ENCODE measurements at regions of chr17 and their contacts with region 1.

Region 1: GRCh38 chr17:39754161-39754951 is 16.6 kb downstream of the GRB7 start:
- DNase-seq: peak; percentile 80
- H3K4me3 Mint-ChIP-seq: peak overlapping the region; percentile 70
- H3K27ac Mint-ChIP-seq: no peak overlapping the region
- H3K4me1 Mint-ChIP-seq: no peaks in the 10 kb centered on the region
- H3K27me3 Mint-ChIP-seq: peaks cover 45% of the 10 kb centered on the region
- CTCF ChIP-seq: peak; percentile 99

Region 2: DNA sequence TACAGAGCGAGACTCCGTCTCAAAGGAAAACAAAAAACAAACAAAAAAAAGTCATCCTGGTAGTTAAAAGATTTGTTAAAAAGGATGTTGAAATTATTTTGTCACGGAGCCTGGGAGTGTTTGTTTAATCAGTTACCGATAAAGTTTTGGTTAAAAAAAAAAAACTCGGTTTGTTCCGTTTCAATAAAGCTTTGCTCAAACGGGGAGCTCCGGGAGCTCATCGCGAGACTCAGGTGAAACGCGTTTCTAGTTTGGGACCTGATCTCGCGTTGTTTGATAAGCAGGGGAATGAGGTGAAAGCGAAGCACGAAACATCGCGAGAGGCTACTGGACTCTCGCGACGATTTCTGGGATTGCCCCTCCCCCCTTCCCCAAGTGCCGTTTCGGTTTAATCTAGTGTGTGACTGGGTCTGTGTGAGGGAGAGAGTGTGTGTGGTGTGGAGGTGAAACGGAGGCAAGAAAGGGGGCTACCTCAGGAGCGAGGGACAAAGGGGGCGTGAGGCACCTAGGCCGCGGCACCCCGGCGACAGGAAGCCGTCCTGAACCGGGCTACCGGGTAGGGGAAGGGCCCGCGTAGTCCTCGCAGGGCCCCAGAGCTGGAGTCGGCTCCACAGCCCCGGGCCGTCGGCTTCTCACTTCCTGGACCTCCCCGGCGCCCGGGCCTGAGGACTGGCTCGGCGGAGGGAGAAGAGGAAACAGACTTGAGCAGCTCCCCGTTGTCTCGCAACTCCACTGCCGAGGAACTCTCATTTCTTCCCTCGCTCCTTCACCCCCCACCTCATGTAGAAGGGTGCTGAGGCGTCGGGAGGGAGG is 293.0 kb before region 1 on chr17 and contains the start of gene CDK12:
- CTCF ChIA-PET with region 1: no interaction called
- POLR2A ChIA-PET with region 1: no interaction called
- intact Hi-C with region 1: no loop called
- DNase-seq: peak; percentile 100
- H3K4me3 Mint-ChIP-seq: peak within 1 kb of the TSS; percentile 89
- H3K27ac Mint-ChIP-seq: peak within 1 kb of the TSS; percentile 98
- H3K4me1 Mint-ChIP-seq: peaks cover 6% of the 10 kb centered on the region
- H3K27me3 Mint-ChIP-seq: no peaks in the 10 kb centered on the region
- CTCF ChIP-seq: no peak
- total RNA-seq, gene CDK12: 71.1 and 71.3 TPM in 2 replicates

Region 3: GRCh38 chr17:39636927-39637736 is 117.2 kb before region 1 on chr17 and contains the start of gene STARD3:
- CTCF ChIA-PET with region 1: interaction called, 10 read pairs
- POLR2A ChIA-PET with region 1: interaction called, 3 read pairs
- intact Hi-C with region 1: loop called (anchors 5 kb)
- DNase-seq: peak; percentile 82
- H3K4me3 Mint-ChIP-seq: peak within 1 kb of the TSS; percentile 93
- H3K27ac Mint-ChIP-seq: peak within 1 kb of the TSS; percentile 97
- H3K4me1 Mint-ChIP-seq: peaks cover 20% of the 10 kb centered on the region
- H3K27me3 Mint-ChIP-seq: peaks cover 3% of the 10 kb centered on the region
- CTCF ChIP-seq: peak; percentile 9
- total RNA-seq, gene STARD3: 30.1 and 31.1 TPM in 2 replicates

Region 4: GRCh38 chr17:39706921-39707337 is 47.4 kb before region 1 on chr17:
- CTCF ChIA-PET with region 1: no interaction called
- POLR2A ChIA-PET with region 1: no interaction called
- intact Hi-C with region 1: no loop called
- DNase-seq: no peak
- H3K4me3 Mint-ChIP-seq: no peak overlapping the region
- H3K27ac Mint-ChIP-seq: no peak overlapping the region
- H3K4me1 Mint-ChIP-seq: peaks cover 16% of the 10 kb centered on the region
- H3K27me3 Mint-ChIP-seq: no peaks in the 10 kb centered on the region
- CTCF ChIP-seq: no peak

Region 5: DNA sequence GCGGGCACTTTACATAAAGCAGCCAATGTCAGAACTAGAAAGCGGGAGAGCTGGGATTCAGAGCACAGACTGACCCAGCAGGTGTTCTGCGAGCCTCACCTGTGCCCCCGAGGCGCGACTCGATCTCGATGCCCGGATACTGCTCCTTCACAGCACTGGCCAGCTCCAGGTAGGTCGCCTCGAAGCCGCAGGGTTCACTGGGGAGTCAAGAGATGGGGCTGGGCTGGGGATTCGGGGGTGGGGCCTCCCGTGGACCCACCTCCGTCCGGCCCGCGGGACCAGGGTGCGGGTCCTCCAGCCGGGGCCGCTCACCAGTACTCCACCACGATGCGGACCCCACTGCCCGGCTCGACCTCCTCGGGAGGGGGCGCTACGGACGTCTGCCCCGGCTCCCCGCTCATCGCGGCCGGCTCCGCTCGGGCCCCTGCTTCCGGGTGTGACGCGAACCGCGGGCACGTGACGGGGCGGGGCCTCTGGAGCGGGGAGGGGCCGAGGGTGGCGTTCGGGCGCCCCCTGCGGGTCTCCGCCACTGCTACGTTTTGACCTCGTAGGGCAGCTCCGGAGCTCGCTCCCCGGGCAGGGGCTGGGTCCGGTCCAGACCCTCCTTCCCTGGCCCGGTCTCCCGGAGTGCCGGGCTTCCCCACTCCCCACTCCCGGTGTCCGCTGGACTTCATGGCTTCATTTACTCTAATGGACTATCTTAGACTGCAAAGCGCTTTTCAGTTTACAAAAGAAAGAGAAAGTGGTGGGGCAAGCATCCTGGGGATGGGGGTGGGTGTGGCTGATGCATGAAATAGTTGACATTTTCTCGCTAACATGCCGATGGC is 24.0 kb before region 1 on chr17 and contains the start of gene MIEN1:
- CTCF ChIA-PET with region 1: interaction called, 19 read pairs
- POLR2A ChIA-PET with region 1: interaction called, 4 read pairs
- intact Hi-C with region 1: no loop called
- DNase-seq: peak; percentile 82
- H3K4me3 Mint-ChIP-seq: peak within 1 kb of the TSS; percentile 78
- H3K27ac Mint-ChIP-seq: peak within 1 kb of the TSS; percentile 73
- H3K4me1 Mint-ChIP-seq: peaks cover 10% of the 10 kb centered on the region
- H3K27me3 Mint-ChIP-seq: no peaks in the 10 kb centered on the region
- CTCF ChIP-seq: peak; percentile 78
- total RNA-seq, gene MIEN1: 42.1 and 51.3 TPM in 2 replicates

Region 6: DNA sequence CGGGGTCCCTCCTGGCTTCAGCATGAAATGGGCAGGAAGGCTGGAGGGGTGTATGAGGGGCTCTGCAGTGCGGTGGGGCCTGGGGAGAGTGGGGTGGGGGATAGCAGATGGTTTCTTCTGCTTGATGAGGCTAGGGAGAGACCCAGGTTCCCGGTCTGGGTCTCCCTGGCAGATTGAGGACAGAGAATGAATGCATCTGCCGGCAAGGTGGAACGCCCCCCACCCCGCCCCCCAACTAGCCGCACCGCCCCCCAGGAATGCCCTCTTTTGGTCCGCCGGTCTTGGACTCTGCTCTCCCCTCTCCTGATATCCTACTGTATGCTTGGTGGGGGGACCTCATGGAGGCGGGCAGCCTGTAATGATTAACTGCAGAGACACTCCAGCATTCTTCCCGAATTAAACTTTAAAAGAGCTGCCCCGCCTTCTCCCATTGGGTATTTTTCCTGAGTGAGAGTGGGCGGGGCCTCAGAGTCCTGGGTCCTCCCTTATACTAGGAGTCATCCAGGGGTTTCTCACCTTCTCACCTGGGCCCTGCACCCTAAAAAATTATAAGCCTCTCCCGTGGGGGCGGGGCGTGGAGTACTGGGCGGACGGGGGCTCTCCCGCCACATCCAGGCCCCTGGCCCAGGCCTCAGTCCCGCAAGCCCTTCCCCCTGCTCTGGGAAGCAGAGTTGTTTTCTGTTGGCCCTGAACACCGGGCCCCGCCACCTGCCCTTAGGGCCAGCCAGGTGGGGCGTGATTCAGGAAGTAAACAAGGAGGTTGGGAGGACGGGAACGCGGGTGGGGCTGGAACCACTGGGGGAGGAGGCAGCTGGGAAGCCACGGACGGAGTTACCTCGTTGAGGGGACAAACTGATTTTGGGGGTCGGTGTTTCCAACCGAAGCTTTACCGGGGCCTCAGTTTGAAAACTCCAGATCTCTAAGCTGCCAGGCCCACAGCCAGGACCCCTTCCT is 15.1 kb before region 1 on chr17:
- CTCF ChIA-PET with region 1: interaction called, 8 read pairs
- POLR2A ChIA-PET with region 1: interaction called, 36 read pairs
- intact Hi-C with region 1: no loop called
- DNase-seq: peak; percentile 90
- H3K4me3 Mint-ChIP-seq: peak overlapping the region; percentile 81
- H3K27ac Mint-ChIP-seq: peak overlapping the region; percentile 95
- H3K4me1 Mint-ChIP-seq: peaks cover 45% of the 10 kb centered on the region
- H3K27me3 Mint-ChIP-seq: peaks cover 11% of the 10 kb centered on the region
- CTCF ChIP-seq: no peak

Region 7: GRCh38 chr17:39769974-39770587 is 15.7 kb after region 1 on chr17:
- CTCF ChIA-PET with region 1: interaction called, 3 read pairs
- POLR2A ChIA-PET with region 1: interaction called, 13 read pairs
- intact Hi-C with region 1: no loop called
- DNase-seq: peak; percentile 95
- H3K4me3 Mint-ChIP-seq: no peak overlapping the region
- H3K27ac Mint-ChIP-seq: peak overlapping the region; percentile 23
- H3K4me1 Mint-ChIP-seq: peaks cover 11% of the 10 kb centered on the region
- H3K27me3 Mint-ChIP-seq: peaks cover 77% of the 10 kb centered on the region
- CTCF ChIP-seq: no peak

Region 8: GRCh38 chr17:39995438-39995837 is 241.1 kb after region 1 on chr17:
- CTCF ChIA-PET with region 1: no interaction called
- POLR2A ChIA-PET with region 1: no interaction called
- intact Hi-C with region 1: no loop called
- DNase-seq: peak; percentile 6
- H3K4me3 Mint-ChIP-seq: no peak overlapping the region
- H3K27ac Mint-ChIP-seq: no peak overlapping the region
- H3K4me1 Mint-ChIP-seq: peaks cover 13% of the 10 kb centered on the region
- H3K27me3 Mint-ChIP-seq: no peaks in the 10 kb centered on the region
- CTCF ChIP-seq: no peak

Measured in MCF 10A (cell line).